ENCODE measurements at regions of chr6 and their contacts with region 1.

Region 1: DNA sequence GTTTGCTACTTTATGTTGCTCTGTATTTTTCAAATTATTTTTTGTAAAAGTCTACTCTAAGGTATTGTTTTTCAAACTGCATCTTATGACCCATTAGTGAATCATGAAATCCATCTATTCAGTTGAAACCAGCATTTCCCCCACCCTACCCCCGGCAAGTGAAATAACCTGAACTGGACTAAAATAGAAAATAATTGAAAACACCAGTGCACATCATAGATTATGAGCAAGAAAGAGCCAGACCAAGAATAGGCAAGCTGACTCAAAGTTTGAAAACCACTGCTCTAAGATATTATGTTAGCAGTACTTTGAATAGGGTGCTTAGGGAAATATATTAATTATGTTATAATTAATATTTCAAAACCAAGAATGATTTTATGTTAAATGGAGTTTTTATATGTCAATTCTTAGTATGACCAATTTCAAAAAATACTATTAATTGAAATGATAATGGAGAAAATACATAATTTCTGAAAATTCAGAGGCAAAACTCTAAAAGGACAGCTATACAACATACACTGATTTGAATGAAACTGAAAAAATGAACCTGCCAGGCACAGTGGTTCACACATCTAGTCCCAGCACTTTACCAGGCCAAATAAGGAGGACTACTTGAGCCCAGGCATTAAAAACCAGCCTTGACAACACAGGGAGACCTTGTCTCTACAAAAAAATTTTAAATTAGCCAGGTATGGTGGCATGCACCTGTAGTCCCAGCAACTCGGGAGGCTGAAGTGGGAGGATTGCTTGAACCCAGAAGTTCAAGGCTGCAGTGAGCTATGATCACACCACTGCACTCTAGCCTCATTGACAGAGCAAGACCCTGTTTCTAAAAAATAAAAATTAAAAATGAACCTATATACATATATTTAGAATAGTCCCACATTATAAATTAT is 112.0 kb downstream of the CDK19 start:
- DNase-seq: no peak
- ATAC-seq: no peak
- H3K4me3 ChIP-seq: no peak overlapping the region
- H3K27ac ChIP-seq: no peak overlapping the region
- H3K4me1 ChIP-seq: peaks cover 26 to 30% of the 10 kb centered on the region in 2 experiments
- H3K27me3 ChIP-seq: no peaks in the 10 kb centered on the region
- CTCF ChIP-seq: no peak
- POLR2A ChIP-seq: no peak
- RAD21 ChIP-seq: no peak

Region 2: GRCh38 chr6:110398778-110399177 is 304.5 kb before region 1 on chr6:
- CTCF ChIA-PET with region 1: no interaction called
- POLR2A ChIA-PET with region 1: no interaction called
- RAD21 ChIA-PET with region 1: no interaction called
- intact Hi-C with region 1: no loop called
- DNase-seq: no peak
- ATAC-seq: peak; percentile 75
- H3K4me3 ChIP-seq: no peak overlapping the region
- H3K27ac ChIP-seq: peak overlapping the region; percentile 1; the same call in 1 of the 2 replicates
- H3K4me1 ChIP-seq: peaks cover 7 to 12% of the 10 kb centered on the region in 2 experiments
- H3K27me3 ChIP-seq: no peaks in the 10 kb centered on the region
- CTCF ChIP-seq: no peak
- POLR2A ChIP-seq: no peak
- RAD21 ChIP-seq: no peak

Region 3: GRCh38 chr6:110815217-110816109 is 112.2 kb after region 1 on chr6 and contains the start of gene CDK19:
- CTCF ChIA-PET with region 1: no interaction called
- POLR2A ChIA-PET with region 1: no interaction called
- RAD21 ChIA-PET with region 1: no interaction called
- intact Hi-C with region 1: loop called (anchors 5 kb)
- DNase-seq: peak; percentile 97
- ATAC-seq: peak; percentile 88
- H3K4me3 ChIP-seq: peak within 1 kb of the TSS; percentile 79 to 88
- H3K27ac ChIP-seq: peak within 1 kb of the TSS; percentile 78
- H3K4me1 ChIP-seq: peaks cover 12 to 13% of the 10 kb centered on the region in 2 experiments; a peak in 3 of 4 replicates
- H3K27me3 ChIP-seq: no peaks in the 10 kb centered on the region
- CTCF ChIP-seq: no peak
- POLR2A ChIP-seq: peak; percentile 96
- RAD21 ChIP-seq: no peak
- total RNA-seq, gene CDK19: 20.0 TPM